HepG2 (cell line): ENCODE measurements at regions of chr6 and their contacts with region 1.

Region 1: GRCh38 chr6:73739096-73739495 is 43.1 kb downstream of the CD109 start:
- DNase-seq: peak; percentile 66
- ATAC-seq: peak; percentile 84
- H3K4me3 ChIP-seq: no peak overlapping the region
- H3K27ac ChIP-seq: no peak overlapping the region
- H3K4me1 ChIP-seq: no peaks in the 10 kb centered on the region
- H3K27me3 ChIP-seq: no peaks in the 10 kb centered on the region
- CTCF ChIP-seq: peak; percentile 74
- EP300 ChIP-seq: no peak
- POLR2A ChIP-seq: no peak
- RAD21 ChIP-seq: peak; percentile 65

Region 2: GRCh38 chr6:73803562-73804241 is 64.6 kb after region 1 on chr6:
- CTCF ChIA-PET with region 1: no interaction called
- POLR2A ChIA-PET with region 1: no interaction called
- in situ Hi-C with region 1: no loop called
- intact Hi-C with region 1: loop called (anchors 5 kb)
- DNase-seq: peak; percentile 35
- ATAC-seq: peak; percentile 89
- H3K4me3 ChIP-seq: no peak overlapping the region
- H3K27ac ChIP-seq: no peak overlapping the region
- H3K4me1 ChIP-seq: peaks cover 6% of the 10 kb centered on the region; the same call in 1 of the 2 replicates
- H3K27me3 ChIP-seq: no peaks in the 10 kb centered on the region
- CTCF ChIP-seq: peak; percentile 64
- EP300 ChIP-seq: no peak
- POLR2A ChIP-seq: no peak
- RAD21 ChIP-seq: no peak

Region 3: GRCh38 chr6:74409447-74409846 is 670.4 kb after region 1 on chr6:
- CTCF ChIA-PET with region 1: no interaction called
- POLR2A ChIA-PET with region 1: no interaction called
- in situ Hi-C with region 1: no loop called
- intact Hi-C with region 1: loop called (anchors 5 kb)
- DNase-seq: peak; percentile 36
- ATAC-seq: peak; percentile 78
- H3K4me3 ChIP-seq: no peak overlapping the region
- H3K27ac ChIP-seq: no peak overlapping the region
- H3K4me1 ChIP-seq: no peaks in the 10 kb centered on the region
- H3K27me3 ChIP-seq: no peaks in the 10 kb centered on the region
- CTCF ChIP-seq: peak; percentile 64
- EP300 ChIP-seq: no peak
- POLR2A ChIP-seq: no peak
- RAD21 ChIP-seq: peak; percentile 61; the same call in 1 of the 2 replicates